PC-9 (cell line): ENCODE measurements at regions of chr9 and their contacts with region 1.

Region 1: DNA sequence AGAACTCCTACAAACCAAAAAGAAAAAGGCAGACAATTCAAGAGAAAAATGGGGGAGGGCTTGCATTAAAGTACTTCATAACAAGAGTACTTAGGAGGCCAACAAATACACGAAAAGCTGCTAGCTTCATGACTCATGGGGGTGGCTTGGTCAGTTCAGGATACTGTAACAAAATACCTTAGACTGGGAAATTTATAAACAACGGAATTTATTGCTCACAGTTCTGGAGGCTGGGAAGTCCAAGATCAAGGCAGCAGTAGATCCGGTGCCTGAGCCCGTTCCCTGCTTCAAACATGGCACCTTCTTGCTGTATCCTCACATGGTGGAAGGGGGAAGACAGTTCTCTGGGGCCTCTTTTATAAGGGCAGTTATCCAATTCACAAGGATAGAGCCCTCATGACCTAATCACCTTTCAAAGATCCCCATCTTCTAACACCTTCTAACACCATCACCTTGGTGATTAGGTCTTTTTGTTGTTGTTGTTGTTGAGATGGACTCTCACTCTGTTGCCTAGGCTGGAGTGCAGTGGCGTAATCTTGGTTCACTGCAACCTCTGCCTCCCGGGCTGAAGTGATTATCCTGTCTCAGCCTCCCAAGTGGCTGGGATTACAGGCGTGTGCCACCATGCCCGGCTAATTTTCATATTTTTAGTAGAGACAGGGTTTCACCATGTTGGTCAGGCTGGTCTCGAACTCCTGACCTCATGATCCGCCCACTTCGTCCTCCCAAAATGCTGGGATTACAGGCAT is 111.2 kb downstream of the C9orf50 start:
- DNase-seq: peak in 1 of 2 experiments; percentile 58
- H3K4me3 ChIP-seq: no peak overlapping the region
- H3K27ac ChIP-seq: no peak overlapping the region
- H3K4me1 ChIP-seq: peaks cover 7% of the 10 kb centered on the region
- H3K27me3 ChIP-seq: no peaks in the 10 kb centered on the region
- CTCF ChIP-seq: no peak

Region 2: DNA sequence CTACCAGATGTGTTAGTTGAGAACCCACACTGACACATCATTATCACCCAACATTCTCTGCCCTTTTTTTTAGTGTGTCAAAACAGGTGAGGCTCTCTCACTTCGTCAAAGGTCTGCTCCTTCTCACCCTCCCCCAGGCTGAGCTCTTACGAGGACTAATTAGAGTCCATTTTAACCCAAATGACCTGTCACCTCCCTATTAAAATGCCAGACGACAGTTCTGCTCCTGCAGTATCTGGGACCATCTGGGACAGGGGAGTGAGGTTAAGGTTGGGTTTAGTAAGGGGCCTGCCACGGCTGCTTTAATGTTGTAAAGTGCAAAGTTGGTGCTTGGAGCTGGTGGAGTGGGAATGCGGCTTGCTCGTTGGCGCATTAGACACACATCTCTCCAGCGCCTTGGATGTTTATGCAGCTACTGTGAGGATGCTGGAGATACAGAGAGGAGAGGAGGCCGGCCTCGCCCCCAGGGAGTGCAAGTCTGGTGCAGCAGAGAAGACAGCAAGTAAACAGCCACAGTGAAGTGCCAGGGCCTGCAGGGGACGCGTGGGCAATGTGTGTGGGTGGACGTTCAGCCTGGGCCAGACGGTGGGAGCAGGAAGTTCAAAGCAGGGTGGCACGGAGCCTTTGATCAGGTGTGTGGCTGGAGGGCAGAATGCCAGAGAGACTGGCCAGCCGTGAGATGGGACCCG is 15.0 kb after region 1 on chr9:
- CTCF ChIA-PET with region 1: no interaction called
- POLR2A ChIA-PET with region 1: interaction called, 15 read pairs
- intact Hi-C with region 1: no loop called
- DNase-seq: no peak
- H3K4me3 ChIP-seq: no peak overlapping the region
- H3K27ac ChIP-seq: no peak overlapping the region
- H3K4me1 ChIP-seq: no peaks in the 10 kb centered on the region
- H3K27me3 ChIP-seq: no peaks in the 10 kb centered on the region
- CTCF ChIP-seq: no peak

Region 3: DNA sequence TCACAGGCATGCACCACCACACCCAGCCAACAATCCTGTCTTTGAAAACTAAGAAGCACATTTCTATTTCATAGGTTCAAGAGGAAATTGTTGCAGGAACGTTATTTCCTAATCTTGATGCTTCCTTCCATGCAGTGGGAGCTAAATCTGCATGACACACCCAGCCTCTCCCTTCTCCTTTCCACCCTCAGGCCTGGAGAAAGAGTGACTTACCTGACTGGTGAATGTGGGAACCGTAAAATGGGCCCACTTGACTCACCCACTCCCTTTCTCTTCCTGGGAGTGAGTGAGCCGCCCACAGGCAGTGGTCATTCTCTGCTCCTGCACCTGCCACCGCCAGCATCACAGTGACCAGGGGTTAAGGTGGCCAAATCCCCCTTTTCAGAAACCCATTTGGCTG is 33.0 kb after region 1 on chr9:
- CTCF ChIA-PET with region 1: no interaction called
- POLR2A ChIA-PET with region 1: interaction called, 11 read pairs
- intact Hi-C with region 1: no loop called
- DNase-seq: peak in 1 of 2 experiments; percentile 46
- H3K4me3 ChIP-seq: no peak overlapping the region
- H3K27ac ChIP-seq: no peak overlapping the region
- H3K4me1 ChIP-seq: peaks cover 11% of the 10 kb centered on the region; the same call in 1 of the 2 replicates
- H3K27me3 ChIP-seq: no peaks in the 10 kb centered on the region
- CTCF ChIP-seq: no peak

Region 4: GRCh38 chr9:129557192-129558036 is 47.7 kb after region 1 on chr9:
- CTCF ChIA-PET with region 1: no interaction called
- POLR2A ChIA-PET with region 1: no interaction called
- intact Hi-C with region 1: no loop called
- DNase-seq: peak; percentile 78 to 95
- H3K4me3 ChIP-seq: peak overlapping the region; percentile 14; the same call in 1 of the 2 replicates
- H3K27ac ChIP-seq: peak overlapping the region; percentile 49
- H3K4me1 ChIP-seq: peaks cover 35% of the 10 kb centered on the region
- H3K27me3 ChIP-seq: no peaks in the 10 kb centered on the region
- CTCF ChIP-seq: no peak